Transverse colon (tissue), 4 donors: ENCODE measurements at regions of chr11 and their contacts with region 1.

Region 1: GRCh38 chr11:116829525-116830183 is at the start of gene APOC3:
- DNase-seq: no peak
- H3K4me3 ChIP-seq: no peak within 1 kb of the TSS
- H3K27ac ChIP-seq: no peak within 1 kb of the TSS
- H3K4me1 ChIP-seq: no peaks in the 10 kb centered on the region
- H3K27me3 ChIP-seq: no peaks in the 10 kb centered on the region
- CTCF ChIP-seq: no peak
- EP300 ChIP-seq: no peak
- POLR2A ChIP-seq: no peak
- total RNA-seq, gene APOC3: 3.0 to 5.3 TPM in 2 of 4 donors, not detected in the others

Region 2: DNA sequence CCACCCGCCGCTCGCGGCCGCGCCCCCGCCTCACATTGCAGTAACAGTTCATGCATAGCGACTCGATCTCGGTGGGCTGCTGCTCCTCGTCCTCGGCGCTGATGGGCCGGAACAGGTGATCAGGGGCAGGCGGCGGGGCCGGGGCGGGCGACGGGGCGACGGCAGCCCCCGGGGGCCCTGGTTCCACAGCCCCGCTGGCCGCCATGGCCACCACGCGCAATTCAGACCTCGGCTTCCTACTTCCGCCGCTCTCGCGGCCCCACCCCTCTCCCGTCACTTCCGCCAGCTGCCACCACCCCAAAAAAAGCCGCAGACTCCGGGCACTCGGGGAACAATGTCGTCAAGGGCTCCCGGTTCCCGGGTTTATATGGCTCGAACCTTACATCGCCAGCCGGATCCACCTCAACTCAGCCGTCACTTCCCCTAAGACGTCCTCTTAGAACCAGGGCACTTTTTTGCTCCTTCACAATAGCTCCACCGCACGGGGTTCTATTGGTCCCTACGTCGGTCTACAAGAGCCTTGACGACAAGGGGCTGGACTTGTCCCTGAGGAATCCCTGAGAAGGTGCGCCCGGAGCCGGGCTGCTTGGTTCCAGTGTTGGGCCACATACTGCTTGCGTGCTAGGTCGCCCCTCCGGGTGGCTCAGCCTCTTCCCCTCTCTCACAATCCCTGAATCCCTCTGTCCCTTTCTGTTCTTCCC is 41.7 kb before region 1 on chr11 and contains the start of gene ZPR1:
- in situ Hi-C with region 1: no loop called
- intact Hi-C with region 1: loop called (anchors 5 kb)
- DNase-seq: peak; percentile 91
- H3K4me3 ChIP-seq: peak within 1 kb of the TSS; percentile 81 to 100 (median 92)
- H3K27ac ChIP-seq: peak within 1 kb of the TSS; percentile 80 to 92 (median 91)
- H3K4me1 ChIP-seq: peaks cover 6 to 27% (median 23%) of the 10 kb centered on the region in 4 donors
- H3K27me3 ChIP-seq: no peaks in the 10 kb centered on the region
- CTCF ChIP-seq: peak in 2 of 5 experiments; percentile 48 to 59
- EP300 ChIP-seq: no peak
- POLR2A ChIP-seq: peak; percentile 81
- total RNA-seq, gene ZPR1: 13.1 to 20.9 (median 16.4) TPM

Region 3: GRCh38 chr11:116862951-116863350 is 33.3 kb after region 1 on chr11:
- in situ Hi-C with region 1: no loop called
- intact Hi-C with region 1: loop called (anchors 1 kb)
- DNase-seq: no peak
- H3K4me3 ChIP-seq: no peak overlapping the region
- H3K27ac ChIP-seq: no peak overlapping the region
- H3K4me1 ChIP-seq: no peaks in the 10 kb centered on the region
- H3K27me3 ChIP-seq: no peaks in the 10 kb centered on the region
- CTCF ChIP-seq: no peak
- EP300 ChIP-seq: no peak
- POLR2A ChIP-seq: no peak

Region 4: GRCh38 chr11:117010808-117011540 is 181.3 kb after region 1 on chr11:
- in situ Hi-C with region 1: no loop called
- intact Hi-C with region 1: no loop called
- DNase-seq: no peak
- H3K4me3 ChIP-seq: no peak overlapping the region
- H3K27ac ChIP-seq: peak overlapping the region in 1 of 4 donors; percentile 31
- H3K4me1 ChIP-seq: peaks cover 0 to 25% (median 4%) of the 10 kb centered on the region in 4 donors
- H3K27me3 ChIP-seq: no peaks in the 10 kb centered on the region
- CTCF ChIP-seq: no peak
- EP300 ChIP-seq: no peak
- POLR2A ChIP-seq: no peak